Common myeloid progenitor, CD34-positive (primary cell): ENCODE measurements at regions of chr17 and their contacts with region 1.

Region 1: DNA sequence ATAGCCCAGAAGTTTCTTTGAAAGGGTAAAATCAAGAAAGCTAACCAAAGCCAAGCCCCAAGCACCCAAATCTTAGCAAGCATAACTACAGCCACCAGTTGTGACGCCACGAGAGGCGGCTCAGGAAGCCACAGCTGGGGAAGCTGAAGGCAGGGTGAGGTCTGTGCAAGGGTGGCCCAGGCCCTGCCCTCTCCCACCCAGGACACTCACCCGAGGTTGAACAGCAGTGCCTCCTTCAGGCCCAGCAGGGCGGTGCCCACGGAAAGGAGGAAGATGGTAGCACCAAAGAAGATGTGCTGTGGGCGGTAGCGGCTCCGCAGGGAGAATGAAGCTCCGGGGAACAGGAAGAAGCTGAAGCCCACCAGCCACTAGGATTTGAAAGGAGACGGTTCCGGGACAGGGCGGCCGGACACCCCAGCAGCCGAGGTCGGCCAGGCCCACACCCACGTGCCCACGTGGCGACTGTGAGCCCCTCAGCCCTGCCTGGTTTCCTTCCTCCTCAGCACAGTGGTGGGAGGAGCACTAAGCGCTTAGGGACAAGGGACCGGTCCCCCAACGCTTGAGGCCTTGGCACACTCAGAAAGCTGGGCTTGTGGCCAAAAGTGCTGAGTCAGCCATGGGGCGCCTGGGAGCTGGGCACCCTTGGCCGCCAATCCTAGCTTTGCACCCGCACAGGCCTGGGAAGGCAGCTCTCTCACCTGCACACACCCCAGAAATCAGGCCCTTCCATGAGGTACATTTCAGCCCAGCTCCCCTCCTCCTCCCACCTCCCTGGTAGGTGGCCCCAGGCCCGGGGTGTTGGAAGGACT is 11.0 kb downstream of the CYB561 start:
- DNase-seq: peak; percentile 73 to 89 (median 86)
- H3K4me3 ChIP-seq: peak overlapping the region in 5 of 7 experiments; percentile 4 to 54 (median 43)
- H3K27ac ChIP-seq: no peak overlapping the region
- H3K4me1 ChIP-seq: peaks cover 10 to 88% (median 86%) of the 10 kb centered on the region in 4 experiments
- H3K27me3 ChIP-seq: no peaks in the 10 kb centered on the region

Region 2: GRCh38 chr17:63309021-63309420 is 126.1 kb before region 1 on chr17:
- CTCF ChIA-PET with region 1: no interaction called
- POLR2A ChIA-PET with region 1: no interaction called
- DNase-seq: peak in 2 of 3 donors; percentile 37 to 60
- H3K4me3 ChIP-seq: no peak overlapping the region
- H3K27ac ChIP-seq: no peak overlapping the region
- H3K4me1 ChIP-seq: peaks cover 0 to 2% (median 0%) of the 10 kb centered on the region in 4 experiments
- H3K27me3 ChIP-seq: no peaks in the 10 kb centered on the region

Region 3: DNA sequence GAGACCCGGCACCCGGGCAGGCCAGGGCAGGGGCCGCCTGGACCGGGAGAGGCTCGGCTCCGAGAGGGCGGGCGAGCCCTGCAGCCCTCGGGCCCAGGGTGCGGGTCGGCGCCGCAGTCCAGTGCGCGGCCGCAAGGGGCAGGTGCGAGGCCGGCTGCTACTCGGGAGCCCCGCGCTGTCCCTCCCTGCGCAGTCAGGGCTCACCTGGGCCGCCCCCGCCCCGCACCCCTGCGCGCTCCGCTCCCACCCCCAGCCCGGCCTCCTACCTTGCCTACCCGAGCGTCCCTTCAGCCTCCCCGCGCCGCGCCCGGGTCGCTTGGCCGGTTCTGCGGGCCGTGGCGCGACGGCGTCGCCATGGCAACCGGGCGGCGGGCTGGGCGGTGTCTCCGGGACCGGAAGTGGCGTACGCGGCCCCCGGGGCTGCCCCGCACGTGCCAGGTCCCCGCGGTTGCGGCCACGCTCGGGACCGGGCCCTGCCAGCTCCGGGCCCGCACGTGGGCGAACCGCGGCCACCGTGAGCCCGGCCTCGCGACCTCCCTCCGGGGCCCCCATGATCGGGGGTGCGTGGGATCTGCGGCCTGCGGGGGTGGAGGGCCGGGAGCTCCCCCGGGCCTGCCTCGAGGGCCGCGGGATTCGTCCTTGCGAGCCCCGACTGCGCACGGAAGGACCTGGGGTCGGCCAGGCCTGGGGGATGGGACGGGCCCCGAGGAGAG is 11.1 kb after region 1 on chr17 and contains the start of gene CYB561:
- CTCF ChIA-PET with region 1: interaction called, 359 read pairs
- POLR2A ChIA-PET with region 1: interaction called, 54 read pairs
- DNase-seq: peak; percentile 62 to 78 (median 75)
- H3K4me3 ChIP-seq: peak within 1 kb of the TSS; percentile 27 to 74 (median 63)
- H3K27ac ChIP-seq: peak within 1 kb of the TSS; percentile 74 to 88
- H3K4me1 ChIP-seq: peaks cover 0 to 81% (median 60%) of the 10 kb centered on the region in 4 experiments
- H3K27me3 ChIP-seq: no peaks in the 10 kb centered on the region

Region 4: GRCh38 chr17:63453031-63453461 is 18.0 kb after region 1 on chr17:
- CTCF ChIA-PET with region 1: interaction called, 359 read pairs
- POLR2A ChIA-PET with region 1: interaction called, 4 read pairs
- DNase-seq: no peak
- H3K4me3 ChIP-seq: no peak overlapping the region
- H3K27ac ChIP-seq: no peak overlapping the region
- H3K4me1 ChIP-seq: peaks cover 0 to 41% (median 32%) of the 10 kb centered on the region in 4 experiments
- H3K27me3 ChIP-seq: no peaks in the 10 kb centered on the region